HepG2 (cell line): ENCODE measurements at regions of chrX and their contacts with region 1.

Region 1: DNA sequence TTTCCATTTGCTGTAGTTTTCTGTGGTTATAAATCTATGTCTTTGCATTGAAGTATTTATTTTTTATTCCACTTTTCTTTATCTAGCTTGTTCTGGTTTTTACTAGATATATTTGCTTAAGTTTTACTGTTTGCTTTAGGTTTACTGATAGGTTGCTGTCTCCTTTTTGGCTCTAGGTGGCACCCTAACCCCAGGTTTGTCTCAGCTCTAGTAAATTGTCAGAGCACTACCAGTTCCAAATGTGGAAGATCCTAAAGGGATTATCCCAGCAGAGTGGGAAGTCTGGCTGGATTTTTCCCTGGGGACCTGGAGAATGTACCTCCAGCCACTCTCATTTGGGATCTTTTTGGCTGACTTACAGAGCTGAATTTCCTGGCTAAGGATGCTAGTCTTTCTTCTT is 106.1 kb downstream of the PBDC1 start:
- DNase-seq: peak; percentile 37
- ATAC-seq: peak; percentile 80
- H3K4me3 ChIP-seq: no peak overlapping the region
- H3K27ac ChIP-seq: no peak overlapping the region
- H3K4me1 ChIP-seq: no peaks in the 10 kb centered on the region
- H3K27me3 ChIP-seq: no peaks in the 10 kb centered on the region
- CTCF ChIP-seq: peak; percentile 67
- EP300 ChIP-seq: no peak
- POLR2A ChIP-seq: no peak
- RAD21 ChIP-seq: 0 out of 2 replicates have a peak, but pooled peaks have one; percentile 24

Region 2: GRCh38 chrX:76407795-76408194 is 128.8 kb after region 1 on chrX:
- CTCF ChIA-PET with region 1: no interaction called
- POLR2A ChIA-PET with region 1: no interaction called
- in situ Hi-C with region 1: no loop called
- intact Hi-C with region 1: no loop called
- DNase-seq: no peak
- ATAC-seq: no peak
- H3K4me3 ChIP-seq: no peak overlapping the region
- H3K27ac ChIP-seq: no peak overlapping the region
- H3K4me1 ChIP-seq: no peaks in the 10 kb centered on the region
- H3K27me3 ChIP-seq: no peaks in the 10 kb centered on the region
- CTCF ChIP-seq: no peak
- EP300 ChIP-seq: no peak
- POLR2A ChIP-seq: no peak
- RAD21 ChIP-seq: no peak

Region 3: GRCh38 chrX:76433219-76433618 is 154.2 kb after region 1 on chrX:
- CTCF ChIA-PET with region 1: no interaction called
- POLR2A ChIA-PET with region 1: no interaction called
- in situ Hi-C with region 1: no loop called
- intact Hi-C with region 1: no loop called
- DNase-seq: no peak
- ATAC-seq: no peak
- H3K4me3 ChIP-seq: no peak overlapping the region
- H3K27ac ChIP-seq: no peak overlapping the region
- H3K4me1 ChIP-seq: no peaks in the 10 kb centered on the region
- H3K27me3 ChIP-seq: no peaks in the 10 kb centered on the region
- CTCF ChIP-seq: no peak
- EP300 ChIP-seq: no peak
- POLR2A ChIP-seq: no peak
- RAD21 ChIP-seq: no peak

Region 4: DNA sequence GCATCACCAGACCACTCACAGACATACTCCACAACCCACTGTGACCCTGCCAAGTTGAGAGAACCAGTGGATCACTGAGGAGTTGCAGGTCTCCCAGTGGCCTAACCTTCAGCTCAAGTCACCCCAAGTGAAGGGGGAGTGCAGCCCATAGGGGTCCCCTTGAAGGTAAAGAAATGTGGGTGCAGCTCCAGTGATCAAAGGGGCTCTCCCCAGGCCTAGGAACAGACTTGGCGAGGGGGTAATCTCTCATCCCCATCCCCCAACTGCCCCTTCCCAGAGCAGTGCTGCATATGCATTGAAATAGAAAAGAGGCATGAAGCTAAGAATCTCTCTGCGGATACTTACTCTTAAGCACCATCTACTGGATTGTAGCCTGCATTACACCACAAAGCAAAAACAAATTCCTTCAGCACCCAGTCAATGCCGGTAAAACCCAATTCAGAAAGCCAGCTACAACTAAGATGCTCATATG is 175.5 kb after region 1 on chrX:
- CTCF ChIA-PET with region 1: interaction called, 11 read pairs
- POLR2A ChIA-PET with region 1: no interaction called
- in situ Hi-C with region 1: loop called (anchors 25 kb)
- intact Hi-C with region 1: loop called (anchors 1 kb)
- DNase-seq: peak; percentile 4
- ATAC-seq: peak; percentile 68
- H3K4me3 ChIP-seq: no peak overlapping the region
- H3K27ac ChIP-seq: no peak overlapping the region
- H3K4me1 ChIP-seq: no peaks in the 10 kb centered on the region
- H3K27me3 ChIP-seq: no peaks in the 10 kb centered on the region
- CTCF ChIP-seq: peak; percentile 53
- EP300 ChIP-seq: no peak
- POLR2A ChIP-seq: no peak
- RAD21 ChIP-seq: no peak